HEK293 (cell line): ENCODE measurements at regions of chr18 and their contacts with region 1.

Region 1: GRCh38 chr18:10851824-10852319 is 297.5 kb downstream of the PIEZO2 start:
- H3K4me3 ChIP-seq: no peak overlapping the region
- H3K27ac ChIP-seq: no peak overlapping the region
- H3K4me1 ChIP-seq: peaks cover 4% of the 10 kb centered on the region; the same call in 1 of the 2 replicates
- CTCF ChIP-seq: peak; percentile 44; the same call in 1 of the 2 replicates

Region 2: GRCh38 chr18:10787293-10787901 is 64.5 kb before region 1 on chr18:
- CTCF ChIA-PET with region 1: interaction called, 15 read pairs
- POLR2A ChIA-PET with region 1: no interaction called
- H3K4me3 ChIP-seq: no peak overlapping the region
- H3K27ac ChIP-seq: no peak overlapping the region
- H3K4me1 ChIP-seq: no peaks in the 10 kb centered on the region
- CTCF ChIP-seq: 0 out of 2 replicates have a peak, but pooled peaks have one; percentile 33

Region 3: DNA sequence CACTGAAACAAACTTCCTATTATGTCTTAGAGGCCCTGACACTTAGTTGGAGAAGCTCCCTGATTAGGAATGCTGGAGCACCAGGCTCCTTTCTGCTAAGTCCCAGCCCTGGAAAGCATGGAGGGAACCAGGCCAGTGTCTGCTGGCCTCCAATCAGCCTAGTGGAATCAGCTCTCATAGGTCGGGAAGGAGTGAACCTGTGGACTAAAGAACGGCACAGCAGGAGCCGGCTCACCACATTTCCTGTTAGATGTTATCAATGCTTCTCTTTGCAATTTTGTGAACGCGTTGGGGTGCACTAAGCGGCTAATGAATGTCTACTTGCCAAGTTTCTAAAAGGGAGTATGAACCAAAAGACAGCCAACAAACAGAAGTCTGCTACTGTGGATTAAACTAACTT is 29.4 kb before region 1 on chr18:
- CTCF ChIA-PET with region 1: no interaction called
- POLR2A ChIA-PET with region 1: no interaction called
- H3K4me3 ChIP-seq: no peak overlapping the region
- H3K27ac ChIP-seq: no peak overlapping the region
- H3K4me1 ChIP-seq: no peaks in the 10 kb centered on the region
- CTCF ChIP-seq: no peak

Region 4: GRCh38 chr18:11033503-11033902 is 181.6 kb after region 1 on chr18:
- CTCF ChIA-PET with region 1: interaction called, 78 read pairs
- POLR2A ChIA-PET with region 1: no interaction called
- H3K4me3 ChIP-seq: no peak overlapping the region
- H3K27ac ChIP-seq: no peak overlapping the region
- H3K4me1 ChIP-seq: no peaks in the 10 kb centered on the region
- CTCF ChIP-seq: no peak

Region 5: DNA sequence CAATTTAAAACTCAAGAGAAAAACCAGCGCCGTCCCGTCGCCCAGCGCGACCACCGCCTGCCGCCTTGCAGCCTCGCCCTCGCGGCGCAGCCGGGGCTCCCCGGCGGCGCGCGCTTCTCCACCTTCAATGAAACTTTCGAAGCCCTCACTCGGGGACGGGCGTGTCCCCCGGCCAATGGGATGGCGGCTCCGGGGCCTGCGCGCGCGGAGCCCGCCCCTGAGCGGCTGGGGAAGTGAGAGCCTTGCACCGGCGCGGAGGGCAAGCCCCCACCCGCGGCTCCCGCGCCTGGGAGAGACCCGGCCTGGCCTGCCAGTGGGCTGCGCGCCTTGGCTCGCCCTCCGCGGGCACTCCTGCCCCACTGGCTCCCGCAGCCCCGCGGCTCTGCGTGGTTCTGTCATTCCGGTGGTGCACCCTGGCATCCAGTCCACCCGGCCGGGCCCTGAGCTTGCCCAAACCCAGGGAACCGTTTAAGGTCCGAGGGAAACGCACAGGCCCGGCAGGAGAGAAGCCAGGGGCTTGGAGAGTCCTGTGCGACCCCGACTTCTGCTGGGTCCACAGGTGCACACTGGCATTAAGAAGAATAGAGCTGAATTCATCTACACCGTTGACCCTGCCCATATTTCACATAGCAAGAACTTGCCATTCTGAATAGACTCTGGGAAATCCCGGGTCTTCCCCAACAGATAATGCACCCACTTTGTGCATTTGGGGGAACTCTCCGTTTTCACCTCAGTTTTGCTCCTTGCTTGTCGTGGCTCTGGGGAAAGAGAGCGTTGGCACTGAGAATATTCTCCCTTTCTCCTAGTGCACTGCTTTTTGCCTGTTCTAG is 297.8 kb after region 1 on chr18 and contains the start of gene PIEZO2:
- CTCF ChIA-PET with region 1: interaction called, 119 read pairs
- POLR2A ChIA-PET with region 1: no interaction called
- H3K4me3 ChIP-seq: peak within 1 kb of the TSS; percentile 45
- H3K27ac ChIP-seq: peak within 1 kb of the TSS; percentile 68; the same call in 1 of the 2 replicates
- H3K4me1 ChIP-seq: peaks cover 6% of the 10 kb centered on the region
- CTCF ChIP-seq: no peak

Region 6: DNA sequence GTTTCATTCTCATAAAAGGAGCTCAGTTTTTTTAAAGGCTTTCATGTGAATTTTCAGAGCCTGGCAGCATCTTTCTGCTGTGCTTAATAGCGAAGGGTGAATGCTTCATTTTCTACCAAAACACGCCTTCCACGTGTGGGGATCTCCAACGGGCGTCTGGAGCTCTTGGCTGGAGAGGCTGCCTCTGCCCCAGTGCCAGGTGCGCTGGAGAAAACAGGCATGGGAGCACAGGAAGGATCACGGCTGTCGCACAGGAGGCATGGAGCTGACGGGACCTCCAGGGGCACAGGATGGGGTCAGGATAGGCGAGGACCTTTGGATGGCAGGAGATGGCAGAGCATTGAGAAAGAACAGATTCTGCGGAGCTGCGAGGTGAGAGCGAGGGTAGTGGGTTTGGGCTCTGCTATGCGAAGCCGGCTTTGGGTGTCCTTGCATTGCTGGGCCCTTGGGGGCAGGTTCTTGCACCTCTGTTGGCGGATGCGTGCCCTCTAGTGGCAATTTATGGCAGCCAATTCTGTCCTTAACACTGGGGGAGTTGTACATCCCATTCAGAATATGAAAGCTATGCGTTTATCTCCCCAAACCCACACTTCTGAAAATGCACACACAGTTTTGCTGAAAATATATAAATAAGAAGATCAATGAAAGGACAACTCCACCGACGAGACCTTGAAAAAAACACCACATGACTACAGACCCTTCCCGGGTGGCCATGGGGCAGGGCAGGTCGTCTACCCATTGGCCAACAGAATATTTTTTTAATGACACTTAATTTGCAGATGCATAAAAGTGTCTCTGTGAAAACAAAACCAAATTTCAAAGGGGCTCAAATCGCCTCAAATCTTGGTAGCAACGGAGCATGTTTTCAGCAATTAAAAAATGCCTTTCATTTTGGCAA is 667.2 kb after region 1 on chr18:
- CTCF ChIA-PET with region 1: interaction called, 15 read pairs
- POLR2A ChIA-PET with region 1: no interaction called
- H3K4me3 ChIP-seq: no peak overlapping the region
- H3K27ac ChIP-seq: no peak overlapping the region
- H3K4me1 ChIP-seq: no peaks in the 10 kb centered on the region
- CTCF ChIP-seq: peak; percentile 82